ENCODE measurements at regions of chr1 and their contacts with region 1.

Region 1: GRCh38 chr1:8302081-8302956 is 15.6 kb upstream of the SLC45A1 start:
- DNase-seq: no peak
- ATAC-seq: no peak
- H3K4me3 ChIP-seq: no peak overlapping the region
- H3K4me3 Mint-ChIP-seq: no peak overlapping the region
- H3K27ac ChIP-seq: no peak overlapping the region
- H3K27ac Mint-ChIP-seq: no peak overlapping the region
- H3K4me1 ChIP-seq: no peaks in the 10 kb centered on the region
- H3K4me1 Mint-ChIP-seq: no peaks in the 10 kb centered on the region
- H3K27me3 ChIP-seq: peaks cover 0 to 7% of the 10 kb centered on the region in 2 experiments
- H3K27me3 Mint-ChIP-seq: peaks cover 3 to 18% of the 10 kb centered on the region in 2 donors

Region 2: GRCh38 chr1:8154621-8155052 is 147.7 kb before region 1 on chr1:
- CTCF ChIA-PET with region 1: no interaction called
- POLR2A ChIA-PET with region 1: interaction called in 1 of 2 experiments, 10 read pairs
- DNase-seq: no peak
- ATAC-seq: no peak
- H3K4me3 ChIP-seq: no peak overlapping the region
- H3K4me3 Mint-ChIP-seq: peak overlapping the region in 1 of 3 donors; percentile 50
- H3K27ac ChIP-seq: no peak overlapping the region
- H3K27ac Mint-ChIP-seq: peak overlapping the region in 1 of 2 donors; percentile 11
- H3K4me1 ChIP-seq: peaks cover 24 to 54% of the 10 kb centered on the region in 2 experiments
- H3K4me1 Mint-ChIP-seq: peaks cover 50 to 51% (median 51%) of the 10 kb centered on the region in 3 donors
- H3K27me3 ChIP-seq: peaks cover 0 to 16% of the 10 kb centered on the region in 2 experiments
- H3K27me3 Mint-ChIP-seq: peaks cover 0 to 1% of the 10 kb centered on the region in 2 donors

Region 3: DNA sequence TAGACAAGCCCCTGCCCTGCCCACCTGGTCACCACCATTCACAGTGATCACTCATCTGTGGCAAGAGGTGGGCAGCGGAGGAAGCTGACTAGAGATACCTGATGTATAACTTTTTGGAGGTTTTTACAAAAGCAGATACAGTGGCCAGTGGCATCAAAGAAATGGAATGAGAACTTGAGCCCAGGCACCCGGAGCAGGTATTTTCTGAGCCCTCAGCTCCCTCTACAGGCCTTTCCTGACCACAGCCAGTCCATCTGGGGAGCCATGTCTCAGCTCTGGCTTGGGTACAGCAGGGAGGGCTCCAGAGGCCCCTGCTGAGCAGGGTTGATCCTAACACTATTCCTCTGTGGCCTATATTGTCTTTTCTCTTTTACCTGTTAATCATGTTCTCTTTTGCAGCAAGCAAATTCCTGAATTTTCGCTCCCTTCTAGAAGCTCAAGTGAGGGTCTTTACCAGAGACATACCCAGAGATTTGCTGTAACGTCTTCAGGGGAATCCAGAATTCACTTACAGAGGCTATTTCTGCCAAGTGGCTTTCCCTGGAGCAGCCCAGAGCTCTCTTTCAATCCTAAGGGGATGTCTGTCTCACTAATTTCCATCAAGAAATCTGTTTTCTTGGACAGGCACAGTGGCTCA is 799.3 kb after region 1 on chr1:
- CTCF ChIA-PET with region 1: no interaction called
- POLR2A ChIA-PET with region 1: no interaction called
- DNase-seq: peak in 1 of 35 experiments; percentile 13
- ATAC-seq: peak in 1 of 4 experiments; percentile 46
- H3K4me3 ChIP-seq: no peak overlapping the region
- H3K4me3 Mint-ChIP-seq: no peak overlapping the region
- H3K27ac ChIP-seq: no peak overlapping the region
- H3K27ac Mint-ChIP-seq: no peak overlapping the region
- H3K4me1 ChIP-seq: no peaks in the 10 kb centered on the region
- H3K4me1 Mint-ChIP-seq: no peaks in the 10 kb centered on the region
- H3K27me3 ChIP-seq: no peaks in the 10 kb centered on the region
- H3K27me3 Mint-ChIP-seq: no peaks in the 10 kb centered on the region

Measured in T-cell (primary cell).